B cell (primary cell): ENCODE measurements at regions of chr2 and their contacts with region 1.

Region 1: GRCh38 chr2:85888684-85889626 is at the start of gene ST3GAL5:
- DNase-seq: peak; percentile 95
- ATAC-seq: peak; percentile 87
- H3K4me3 ChIP-seq: peak within 1 kb of the TSS; percentile 57 to 95 (median 83)
- H3K4me3 Mint-ChIP-seq: peak within 1 kb of the TSS; percentile 98
- H3K27ac ChIP-seq: peak within 1 kb of the TSS; percentile 71 to 72
- H3K27ac Mint-ChIP-seq: peak within 1 kb of the TSS; percentile 94
- H3K4me1 ChIP-seq: peaks cover 43 to 62% of the 10 kb centered on the region in 2 donors
- H3K4me1 Mint-ChIP-seq: peaks cover 75% of the 10 kb centered on the region
- H3K27me3 ChIP-seq: no peaks in the 10 kb centered on the region
- H3K27me3 Mint-ChIP-seq: no peaks in the 10 kb centered on the region
- CTCF ChIP-seq: peak; percentile 84
- total RNA-seq, gene ST3GAL5: 90.3 and 94.3 TPM in 2 replicates

Region 2: GRCh38 chr2:85728883-85729824 is 159.8 kb before region 1 on chr2:
- CTCF ChIA-PET with region 1: interaction called, 4 read pairs
- POLR2A ChIA-PET with region 1: no interaction called
- intact Hi-C with region 1: loop called (anchors 10 kb)
- DNase-seq: peak; percentile 80
- ATAC-seq: peak; percentile 88
- H3K4me3 ChIP-seq: no peak overlapping the region
- H3K4me3 Mint-ChIP-seq: no peak overlapping the region
- H3K27ac ChIP-seq: no peak overlapping the region
- H3K27ac Mint-ChIP-seq: no peak overlapping the region
- H3K4me1 ChIP-seq: peaks cover 3 to 7% of the 10 kb centered on the region in 2 donors
- H3K4me1 Mint-ChIP-seq: no peaks in the 10 kb centered on the region
- H3K27me3 ChIP-seq: peaks cover 0 to 10% (median 3%) of the 10 kb centered on the region in 4 experiments
- H3K27me3 Mint-ChIP-seq: peaks cover 23% of the 10 kb centered on the region
- CTCF ChIP-seq: peak; percentile 96

Region 3: DNA sequence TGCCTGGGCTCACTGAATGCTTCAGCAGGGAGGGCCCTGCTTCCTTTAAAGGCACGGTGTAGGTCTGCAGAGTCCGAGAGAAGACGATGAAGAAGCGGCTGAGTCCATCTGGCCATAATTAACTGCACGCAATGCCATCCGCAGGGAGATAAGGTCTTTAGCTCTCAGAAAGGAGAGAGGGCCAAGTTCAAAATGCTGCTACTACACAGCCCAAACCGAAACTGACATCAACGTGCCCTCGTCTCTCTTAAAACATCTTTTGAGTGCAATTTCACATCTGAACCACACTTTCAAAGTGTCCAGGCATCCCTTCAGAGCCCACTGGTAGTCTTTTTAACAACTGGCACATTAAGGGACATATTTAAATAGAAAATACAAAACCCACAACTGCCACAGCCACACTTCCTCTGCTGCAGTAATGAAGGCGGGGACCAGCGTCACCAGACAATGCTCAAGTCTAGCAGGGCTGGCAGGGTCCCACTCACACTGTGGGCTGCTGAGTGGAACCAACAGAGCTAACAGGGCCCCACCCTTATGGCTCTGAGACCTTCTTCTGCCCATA is 35.9 kb before region 1 on chr2:
- CTCF ChIA-PET with region 1: interaction called, 68 read pairs
- POLR2A ChIA-PET with region 1: interaction called, 25 read pairs
- intact Hi-C with region 1: loop called (anchors 1 kb)
- DNase-seq: peak; percentile 81
- ATAC-seq: peak; percentile 82
- H3K4me3 ChIP-seq: peak overlapping the region; percentile 29 to 56 (median 38)
- H3K4me3 Mint-ChIP-seq: peak overlapping the region; percentile 87
- H3K27ac ChIP-seq: peak overlapping the region; percentile 95 to 100
- H3K27ac Mint-ChIP-seq: peak overlapping the region; percentile 99
- H3K4me1 ChIP-seq: peaks cover 49 to 53% of the 10 kb centered on the region in 2 donors
- H3K4me1 Mint-ChIP-seq: peaks cover 70% of the 10 kb centered on the region
- H3K27me3 ChIP-seq: no peaks in the 10 kb centered on the region
- H3K27me3 Mint-ChIP-seq: no peaks in the 10 kb centered on the region
- CTCF ChIP-seq: no peak

Region 4: GRCh38 chr2:85878719-85879385 is 10.1 kb before region 1 on chr2:
- CTCF ChIA-PET with region 1: interaction called, 13 read pairs
- POLR2A ChIA-PET with region 1: interaction called, 4 read pairs
- intact Hi-C with region 1: no loop called
- DNase-seq: no peak
- ATAC-seq: no peak
- H3K4me3 ChIP-seq: no peak overlapping the region
- H3K4me3 Mint-ChIP-seq: peak overlapping the region; percentile 5
- H3K27ac ChIP-seq: peak overlapping the region in 1 of 2 donors; percentile 27
- H3K27ac Mint-ChIP-seq: peak overlapping the region; percentile 23
- H3K4me1 ChIP-seq: peaks cover 28 to 45% of the 10 kb centered on the region in 2 donors
- H3K4me1 Mint-ChIP-seq: peaks cover 73% of the 10 kb centered on the region
- H3K27me3 ChIP-seq: no peaks in the 10 kb centered on the region
- H3K27me3 Mint-ChIP-seq: no peaks in the 10 kb centered on the region
- CTCF ChIP-seq: no peak

Region 5: DNA sequence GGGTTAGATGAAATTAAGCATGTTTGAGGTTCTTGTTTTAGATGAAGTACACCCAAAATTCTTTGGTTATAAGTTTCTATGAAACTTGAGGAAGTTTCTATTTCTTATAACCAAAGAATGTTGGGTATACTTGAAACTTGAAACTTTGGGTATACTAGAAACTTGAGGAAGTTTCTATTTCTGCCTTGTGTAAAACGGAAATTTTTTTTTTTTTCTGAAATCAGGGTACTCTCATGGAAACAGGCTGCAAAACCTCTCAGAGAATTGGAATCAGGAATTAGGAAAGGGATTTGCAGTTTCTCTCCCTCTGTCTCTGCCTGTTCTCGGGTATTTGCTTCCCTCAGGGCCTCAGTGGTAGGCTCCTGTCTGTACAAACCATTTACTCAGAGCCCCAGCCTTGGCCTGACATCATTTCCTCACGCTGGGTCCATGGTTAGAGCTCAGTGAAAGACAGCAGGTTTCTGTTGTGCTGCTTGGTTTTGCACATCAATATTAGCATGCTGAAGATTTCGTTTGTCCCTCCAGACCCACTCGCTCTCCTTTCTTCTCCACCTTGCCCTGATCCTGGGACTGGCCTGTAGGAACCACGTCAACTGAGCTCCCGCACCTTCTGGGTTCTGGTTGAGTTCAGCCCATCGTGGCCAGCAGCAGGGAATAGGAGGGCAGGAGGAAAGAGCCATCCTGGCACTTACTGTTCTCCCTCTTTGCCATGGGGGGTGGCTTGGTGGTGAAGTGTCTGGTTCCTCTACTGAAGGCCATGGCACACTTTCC is 110.3 kb after region 1 on chr2:
- CTCF ChIA-PET with region 1: interaction called, 11 read pairs
- POLR2A ChIA-PET with region 1: interaction called, 4 read pairs
- intact Hi-C with region 1: no loop called
- DNase-seq: peak; percentile 64
- ATAC-seq: peak; percentile 73
- H3K4me3 ChIP-seq: peak overlapping the region in 3 of 5 experiments; percentile 16 to 52 (median 27)
- H3K4me3 Mint-ChIP-seq: peak overlapping the region; percentile 59
- H3K27ac ChIP-seq: peak overlapping the region; percentile 79 to 87
- H3K27ac Mint-ChIP-seq: peak overlapping the region; percentile 93
- H3K4me1 ChIP-seq: peaks cover 73 to 74% of the 10 kb centered on the region in 2 donors
- H3K4me1 Mint-ChIP-seq: peaks cover 78% of the 10 kb centered on the region
- H3K27me3 ChIP-seq: no peaks in the 10 kb centered on the region
- H3K27me3 Mint-ChIP-seq: no peaks in the 10 kb centered on the region
- CTCF ChIP-seq: no peak

Region 6: DNA sequence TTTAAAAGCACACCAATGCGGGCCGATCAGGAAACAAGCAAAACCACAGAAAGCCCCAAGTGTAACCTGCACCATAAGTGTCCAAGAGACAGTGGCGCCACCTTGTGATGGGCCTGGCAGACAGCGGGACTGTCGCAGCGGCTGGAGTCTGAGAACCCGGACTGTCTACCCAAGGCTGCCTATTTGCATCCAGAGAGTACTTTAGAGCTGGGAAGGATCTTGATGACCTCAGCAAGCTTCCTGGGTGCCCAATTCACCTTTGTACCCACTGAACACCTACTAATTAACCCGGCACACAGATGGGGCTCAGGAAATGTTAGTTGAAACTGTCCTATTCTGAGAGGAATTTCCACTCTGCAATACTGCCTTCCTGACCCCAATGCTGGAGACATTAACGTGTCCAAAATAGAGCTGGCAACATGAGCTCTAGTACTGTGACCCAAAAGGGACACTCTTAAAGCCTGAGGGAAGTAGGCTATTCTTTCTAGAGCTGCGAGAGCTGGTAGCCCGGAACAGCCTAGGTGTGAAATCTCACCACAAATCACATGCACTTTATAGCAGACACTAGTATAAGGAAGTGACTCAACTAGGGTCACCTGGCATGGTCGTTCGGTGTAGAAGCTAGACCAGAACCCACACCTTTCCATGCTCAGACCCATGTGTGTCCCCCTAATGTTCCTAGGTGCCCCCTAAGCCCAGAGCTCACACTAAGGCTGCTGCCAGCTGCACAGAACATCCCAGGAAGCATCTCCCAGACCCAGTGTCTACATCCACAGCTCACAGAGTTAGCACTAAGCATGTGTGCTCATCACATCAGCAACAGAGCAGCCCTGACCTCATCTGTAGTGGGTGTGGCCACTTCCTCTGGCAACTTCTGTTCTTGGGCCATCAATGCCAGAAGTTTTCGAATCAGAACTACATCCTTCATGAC is 191.3 kb after region 1 on chr2:
- CTCF ChIA-PET with region 1: interaction called, 138 read pairs
- POLR2A ChIA-PET with region 1: interaction called, 10 read pairs
- intact Hi-C with region 1: loop called (anchors 1 kb)
- DNase-seq: peak; percentile 88
- ATAC-seq: peak; percentile 76
- H3K4me3 ChIP-seq: no peak overlapping the region
- H3K4me3 Mint-ChIP-seq: peak overlapping the region; percentile 66
- H3K27ac ChIP-seq: peak overlapping the region; percentile 83 to 88
- H3K27ac Mint-ChIP-seq: peak overlapping the region; percentile 94
- H3K4me1 ChIP-seq: peaks cover 22 to 35% of the 10 kb centered on the region in 2 donors
- H3K4me1 Mint-ChIP-seq: peaks cover 37% of the 10 kb centered on the region
- H3K27me3 ChIP-seq: no peaks in the 10 kb centered on the region
- H3K27me3 Mint-ChIP-seq: no peaks in the 10 kb centered on the region
- CTCF ChIP-seq: peak; percentile 78

Region 7: GRCh38 chr2:86201671-86202335 is 312.8 kb after region 1 on chr2:
- CTCF ChIA-PET with region 1: no interaction called
- POLR2A ChIA-PET with region 1: no interaction called
- intact Hi-C with region 1: loop called (anchors 2 kb)
- DNase-seq: no peak
- ATAC-seq: no peak
- H3K4me3 ChIP-seq: no peak overlapping the region
- H3K4me3 Mint-ChIP-seq: peak overlapping the region; percentile 3
- H3K27ac ChIP-seq: no peak overlapping the region
- H3K27ac Mint-ChIP-seq: no peak overlapping the region
- H3K4me1 ChIP-seq: peaks cover 11 to 18% of the 10 kb centered on the region in 2 donors
- H3K4me1 Mint-ChIP-seq: peaks cover 29% of the 10 kb centered on the region
- H3K27me3 ChIP-seq: no peaks in the 10 kb centered on the region
- H3K27me3 Mint-ChIP-seq: no peaks in the 10 kb centered on the region
- CTCF ChIP-seq: no peak